Activated CD4-positive, alpha-beta T cell treated with anti-CD3 and anti-CD28 coated beads for 36 hours (primary cell): ENCODE measurements at regions of chr20 and their contacts with region 1.

Region 1: DNA sequence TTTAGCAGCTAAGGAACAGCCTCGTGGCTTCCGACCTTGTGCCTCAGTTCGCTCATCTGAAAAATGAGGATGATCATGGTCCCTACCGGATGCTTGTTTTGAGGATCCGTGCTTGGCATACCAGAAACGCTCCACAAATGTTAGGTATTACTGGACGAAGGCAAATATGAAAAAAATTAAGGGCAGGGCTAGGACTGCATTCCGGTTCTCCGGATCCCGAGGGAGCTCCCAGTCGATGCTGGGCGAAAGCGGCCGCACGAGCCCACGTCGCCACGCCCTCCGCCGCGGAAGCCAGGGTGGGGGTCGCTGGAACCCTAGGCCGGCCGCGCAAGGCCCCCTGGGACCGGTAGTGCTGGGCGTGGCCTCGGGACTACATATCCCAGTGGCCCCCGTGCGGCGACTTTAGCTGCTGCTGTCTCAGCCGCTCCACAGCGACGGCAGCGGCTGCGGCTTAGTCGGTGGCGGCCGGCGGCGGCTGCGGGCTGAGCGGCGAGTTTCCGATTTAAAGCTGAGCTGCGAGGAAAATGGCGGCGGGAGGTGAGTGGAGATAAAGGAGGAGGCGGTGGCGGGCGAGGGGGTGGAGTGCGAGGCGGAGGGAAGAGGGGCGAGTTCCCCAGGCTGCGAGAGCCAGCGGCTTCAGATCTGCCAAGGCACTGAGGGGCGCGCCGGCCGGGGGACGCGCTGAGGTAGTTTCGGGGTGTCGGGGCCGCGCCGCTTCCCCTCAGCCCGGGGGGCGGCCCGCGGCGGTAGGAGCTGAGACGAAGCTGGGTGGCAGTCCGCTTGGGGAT is at the start of gene NCOA3:
- DNase-seq: peak; percentile 98
- ATAC-seq: peak; percentile 82
- H3K4me3 Mint-ChIP-seq: peak within 1 kb of the TSS; percentile 99
- H3K27ac Mint-ChIP-seq: peak within 1 kb of the TSS; percentile 95
- H3K4me1 Mint-ChIP-seq: peaks cover 58% of the 10 kb centered on the region
- H3K27me3 Mint-ChIP-seq: no peaks in the 10 kb centered on the region
- total RNA-seq, gene NCOA3: 76.4 to 83.4 TPM

Region 2: GRCh38 chr20:46400828-46401477 is 1100.7 kb before region 1 on chr20:
- CTCF ChIA-PET with region 1: no interaction called
- POLR2A ChIA-PET with region 1: no interaction called
- intact Hi-C with region 1: loop called in 1 of 2 experiments (anchors 5 kb)
- DNase-seq: peak; percentile 41
- ATAC-seq: peak; percentile 87
- H3K4me3 Mint-ChIP-seq: peak overlapping the region; percentile 37
- H3K27ac Mint-ChIP-seq: peak overlapping the region; percentile 80
- H3K4me1 Mint-ChIP-seq: peaks cover 64% of the 10 kb centered on the region
- H3K27me3 Mint-ChIP-seq: no peaks in the 10 kb centered on the region

Region 3: DNA sequence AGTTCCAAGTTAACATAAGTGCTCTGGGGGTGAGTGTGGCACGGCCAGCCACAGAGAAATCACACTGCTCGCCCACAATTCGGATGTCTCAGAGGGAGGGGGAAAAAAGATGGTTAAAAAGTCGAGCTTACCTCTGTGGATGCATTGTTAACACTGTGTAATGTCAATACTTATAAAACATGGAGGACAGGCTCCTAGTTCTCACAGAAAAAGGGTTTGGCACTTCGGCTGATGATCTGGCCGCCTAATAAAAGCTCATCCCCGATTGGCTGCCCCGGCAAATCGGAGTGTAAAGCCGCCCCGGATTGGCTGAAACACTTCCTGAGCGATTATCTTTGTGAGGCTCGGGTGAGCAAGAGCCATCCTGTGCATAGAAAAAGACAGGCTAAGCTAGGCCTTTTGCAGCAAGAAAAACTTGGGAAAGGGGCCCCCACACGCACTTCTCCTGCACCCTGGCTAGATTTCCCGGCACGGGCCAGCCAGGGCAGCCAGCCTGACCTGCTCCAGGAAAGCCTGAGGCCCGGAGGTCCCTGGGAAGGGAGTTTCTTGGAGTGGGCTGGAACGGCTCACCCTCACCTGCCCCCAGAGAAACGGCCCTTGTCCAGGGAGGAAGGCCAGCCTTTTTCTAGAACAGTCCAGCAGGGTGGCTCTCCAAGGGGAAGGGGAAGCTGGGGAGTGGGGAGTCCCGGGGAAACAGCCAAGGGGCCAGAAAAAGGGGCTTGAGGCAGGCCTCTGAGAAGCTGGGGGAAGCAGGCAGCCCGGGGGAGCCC is 145.0 kb before region 1 on chr20 and contains the start of gene ZMYND8:
- CTCF ChIA-PET with region 1: interaction called, 3 read pairs
- POLR2A ChIA-PET with region 1: no interaction called
- intact Hi-C with region 1: loop called in 1 of 2 experiments (anchors 1 kb)
- DNase-seq: peak; percentile 94
- ATAC-seq: peak; percentile 85
- H3K4me3 Mint-ChIP-seq: peak within 1 kb of the TSS; percentile 77
- H3K27ac Mint-ChIP-seq: peak within 1 kb of the TSS; percentile 98
- H3K4me1 Mint-ChIP-seq: peaks cover 54% of the 10 kb centered on the region
- H3K27me3 Mint-ChIP-seq: no peaks in the 10 kb centered on the region
- total RNA-seq, gene ZMYND8: 33.7 to 50.3 TPM

Region 4: DNA sequence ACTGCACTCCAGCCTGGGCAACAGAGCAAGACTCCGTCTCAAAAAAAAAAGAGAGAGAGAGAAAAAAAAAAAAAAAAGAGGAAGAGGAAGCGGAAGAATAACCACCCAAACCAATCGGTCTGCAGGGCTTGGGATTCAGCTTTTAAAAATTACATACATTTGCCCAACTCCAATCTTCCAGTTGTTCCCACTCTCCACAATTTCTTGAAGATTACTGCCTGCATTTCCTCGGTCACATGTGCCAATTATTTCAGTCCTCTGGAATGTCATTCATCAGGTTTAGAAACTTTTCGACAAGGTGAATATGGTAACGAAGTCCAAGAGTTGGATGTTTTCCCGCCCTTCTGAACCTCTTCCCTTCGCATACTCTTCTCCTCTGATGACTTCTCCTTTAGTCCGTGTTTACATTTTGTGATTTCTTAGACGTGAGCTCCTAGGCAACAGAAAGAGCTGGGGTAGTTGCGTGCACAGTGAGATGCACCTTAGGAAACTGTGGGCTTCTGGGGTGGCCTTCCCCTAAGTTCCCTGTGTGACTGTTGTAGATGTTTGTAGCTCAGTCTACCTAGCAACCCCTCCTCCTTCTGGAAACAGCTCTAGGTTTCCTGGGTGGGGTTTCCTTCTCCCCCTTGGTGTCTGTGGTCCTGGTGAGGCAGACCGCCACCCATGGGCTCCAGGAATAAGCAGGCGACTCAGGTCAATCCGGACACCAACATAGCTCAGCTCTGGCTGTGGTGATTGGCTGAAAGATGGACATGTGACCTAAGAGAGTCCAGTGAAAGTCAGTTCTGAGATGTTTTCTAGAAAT is 62.9 kb before region 1 on chr20:
- CTCF ChIA-PET with region 1: no interaction called
- POLR2A ChIA-PET with region 1: no interaction called
- intact Hi-C with region 1: no loop called
- DNase-seq: no peak
- ATAC-seq: no peak
- H3K4me3 Mint-ChIP-seq: no peak overlapping the region
- H3K27ac Mint-ChIP-seq: no peak overlapping the region
- H3K4me1 Mint-ChIP-seq: no peaks in the 10 kb centered on the region
- H3K27me3 Mint-ChIP-seq: no peaks in the 10 kb centered on the region

Region 5: GRCh38 chr20:47487175-47487917 is 14.3 kb before region 1 on chr20:
- CTCF ChIA-PET with region 1: interaction called, 36 read pairs
- POLR2A ChIA-PET with region 1: interaction called, 18 read pairs
- intact Hi-C with region 1: loop called (anchors 1 kb)
- DNase-seq: peak; percentile 78
- ATAC-seq: peak; percentile 88
- H3K4me3 Mint-ChIP-seq: peak overlapping the region; percentile 26
- H3K27ac Mint-ChIP-seq: peak overlapping the region; percentile 99
- H3K4me1 Mint-ChIP-seq: peaks cover 80% of the 10 kb centered on the region
- H3K27me3 Mint-ChIP-seq: no peaks in the 10 kb centered on the region

Region 6: GRCh38 chr20:47521059-47521808 is 19.6 kb after region 1 on chr20:
- CTCF ChIA-PET with region 1: interaction called, 5 read pairs
- POLR2A ChIA-PET with region 1: interaction called, 10 read pairs
- intact Hi-C with region 1: loop called in 1 of 2 experiments (anchors 2 kb)
- DNase-seq: peak; percentile 43
- ATAC-seq: peak; percentile 39
- H3K4me3 Mint-ChIP-seq: no peak overlapping the region
- H3K27ac Mint-ChIP-seq: peak overlapping the region; percentile 59
- H3K4me1 Mint-ChIP-seq: peaks cover 49% of the 10 kb centered on the region
- H3K27me3 Mint-ChIP-seq: no peaks in the 10 kb centered on the region

Region 7: GRCh38 chr20:47620808-47621805 is 119.4 kb after region 1 on chr20:
- CTCF ChIA-PET with region 1: interaction called, 15 read pairs
- POLR2A ChIA-PET with region 1: no interaction called
- intact Hi-C with region 1: loop called (anchors 1 to 2 kb)
- DNase-seq: no peak
- ATAC-seq: peak; percentile 61
- H3K4me3 Mint-ChIP-seq: no peak overlapping the region
- H3K27ac Mint-ChIP-seq: peak overlapping the region; percentile 79
- H3K4me1 Mint-ChIP-seq: peaks cover 33% of the 10 kb centered on the region
- H3K27me3 Mint-ChIP-seq: no peaks in the 10 kb centered on the region